A549 (cell line): ENCODE measurements at regions of chr7 and their contacts with region 1.

Region 1: DNA sequence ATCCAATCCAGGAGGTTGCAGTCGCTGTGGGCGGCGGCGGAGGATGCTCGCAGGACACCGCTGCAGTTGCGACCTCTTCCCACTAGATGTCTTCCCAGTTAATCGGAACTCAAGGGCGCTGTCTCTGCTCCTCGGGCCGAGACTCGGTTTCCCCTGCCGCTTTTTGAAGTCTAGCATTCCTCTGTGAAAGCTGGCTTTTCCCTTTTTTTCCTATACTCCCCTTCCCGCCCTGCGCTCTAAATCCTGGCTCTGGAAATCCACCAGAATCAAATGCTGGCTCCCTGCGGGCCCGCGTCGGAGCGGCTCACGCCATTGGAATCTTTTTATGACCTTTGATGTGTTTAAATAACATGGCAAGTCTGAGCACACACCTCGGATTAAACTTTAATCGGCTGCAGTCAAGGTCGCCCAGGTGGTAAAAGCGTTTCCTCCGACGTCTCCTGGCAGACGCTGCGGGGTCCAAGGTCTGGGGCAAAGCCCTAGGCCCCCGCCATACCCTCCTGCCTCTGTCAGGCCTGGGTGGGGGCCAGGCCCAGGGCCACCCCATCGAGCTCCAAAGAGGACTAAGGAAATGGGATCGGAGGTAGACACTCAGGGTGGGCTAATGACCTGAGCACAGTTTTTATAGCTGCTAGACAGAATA is 10.7 kb upstream of the HOXA13 start:
- DNase-seq: peak; percentile 64 to 79
- ATAC-seq: peak; percentile 91 to 94
- H3K4me3 ChIP-seq: peak overlapping the region; percentile 33
- H3K27ac ChIP-seq: peak overlapping the region; percentile 50 to 69
- H3K4me1 ChIP-seq: peaks cover 12% of the 10 kb centered on the region; the same call in 2 of the 3 replicates
- CTCF ChIP-seq: peak; percentile 67
- EP300 ChIP-seq: no peak
- POLR2A ChIP-seq: no peak
- RAD21 ChIP-seq: peak; percentile 77 to 79

Region 2: DNA sequence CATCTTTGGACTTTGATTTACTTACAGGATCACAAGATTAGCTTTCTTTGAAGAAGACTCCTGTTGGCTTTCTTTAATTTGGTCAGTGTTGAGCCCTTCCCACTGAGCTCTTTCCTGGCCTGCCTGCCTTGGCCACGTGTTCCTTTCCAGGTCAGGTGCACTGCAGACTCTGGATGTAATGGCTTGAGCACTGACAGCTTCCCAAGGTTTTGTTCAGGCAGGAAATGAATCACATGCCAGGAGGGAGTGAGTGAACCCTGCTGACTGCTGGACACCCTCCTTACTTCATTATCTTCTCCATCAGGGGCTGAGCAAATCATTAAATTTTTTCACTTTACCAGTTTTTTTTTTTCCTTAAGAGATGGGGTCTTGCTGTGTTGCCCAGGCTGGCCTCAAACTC is 889.1 kb before region 1 on chr7:
- CTCF ChIA-PET with region 1: no interaction called
- POLR2A ChIA-PET with region 1: no interaction called
- DNase-seq: no peak
- ATAC-seq: peak in 1 of 2 experiments; percentile 24; a peak in 1 of 6 replicates
- H3K4me3 ChIP-seq: no peak overlapping the region
- H3K27ac ChIP-seq: no peak overlapping the region
- H3K4me1 ChIP-seq: no peaks in the 10 kb centered on the region
- CTCF ChIP-seq: no peak
- EP300 ChIP-seq: no peak
- POLR2A ChIP-seq: no peak
- RAD21 ChIP-seq: no peak

Region 3: DNA sequence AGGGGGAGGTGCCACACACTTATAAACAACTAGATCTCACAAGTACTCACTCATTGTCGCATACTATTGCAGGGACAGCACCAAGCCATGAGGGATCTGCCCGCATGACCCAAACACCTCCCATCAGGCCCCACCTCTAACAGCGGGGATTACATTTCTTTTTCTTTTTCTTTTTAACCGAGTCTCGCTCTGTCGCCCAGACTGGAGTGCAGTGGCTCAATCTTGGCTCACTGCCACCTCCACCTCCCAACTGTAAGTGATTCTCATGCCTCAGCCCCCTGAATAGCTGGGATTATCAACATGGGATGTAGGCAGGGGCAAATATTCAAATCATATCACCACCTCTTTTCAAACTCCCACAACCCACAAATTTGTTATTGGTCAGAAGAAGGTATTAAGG is 422.9 kb before region 1 on chr7:
- CTCF ChIA-PET with region 1: no interaction called
- POLR2A ChIA-PET with region 1: no interaction called
- DNase-seq: no peak
- ATAC-seq: no peak
- H3K4me3 ChIP-seq: no peak overlapping the region
- H3K27ac ChIP-seq: no peak overlapping the region
- H3K4me1 ChIP-seq: no peaks in the 10 kb centered on the region
- CTCF ChIP-seq: no peak
- EP300 ChIP-seq: no peak
- POLR2A ChIP-seq: no peak
- RAD21 ChIP-seq: no peak

Region 4: GRCh38 chr7:27224983-27225934 is 14.7 kb after region 1 on chr7:
- CTCF ChIA-PET with region 1: interaction called, 48 read pairs
- POLR2A ChIA-PET with region 1: no interaction called
- DNase-seq: no peak
- ATAC-seq: no peak
- H3K4me3 ChIP-seq: no peak overlapping the region
- H3K27ac ChIP-seq: no peak overlapping the region
- H3K4me1 ChIP-seq: no peaks in the 10 kb centered on the region
- CTCF ChIP-seq: no peak
- EP300 ChIP-seq: no peak
- POLR2A ChIP-seq: no peak
- RAD21 ChIP-seq: no peak

Region 5: DNA sequence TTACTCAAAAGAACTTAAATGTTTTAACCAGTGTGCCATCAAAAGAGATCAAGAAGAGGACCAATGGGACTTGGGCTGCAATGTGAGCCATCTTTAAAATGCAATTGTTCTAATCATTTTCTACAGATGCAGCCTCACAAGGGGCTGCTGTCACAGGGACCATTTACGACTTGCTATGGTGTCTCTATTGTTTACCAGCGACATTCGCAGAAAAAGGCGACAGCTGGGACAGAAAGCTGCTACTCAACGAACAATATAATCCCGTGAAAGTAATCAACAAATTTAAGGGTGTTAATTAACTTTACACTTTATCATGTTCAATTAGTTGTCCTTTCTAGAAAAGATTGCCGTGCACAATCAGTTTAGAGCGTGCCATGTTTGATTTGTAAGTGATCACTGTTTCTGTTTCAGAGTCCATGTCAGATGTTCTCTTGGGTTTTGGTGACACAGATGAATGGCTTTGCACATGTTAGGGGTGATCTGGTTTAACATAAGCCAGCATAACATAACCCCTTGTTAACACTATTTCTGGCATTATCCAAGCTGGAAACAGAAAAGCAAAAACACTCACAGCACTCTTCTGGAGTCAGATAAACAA is 341.3 kb after region 1 on chr7:
- CTCF ChIA-PET with region 1: interaction called, 10 read pairs
- POLR2A ChIA-PET with region 1: no interaction called
- DNase-seq: no peak
- ATAC-seq: no peak
- H3K4me3 ChIP-seq: no peak overlapping the region
- H3K27ac ChIP-seq: no peak overlapping the region
- H3K4me1 ChIP-seq: peaks cover 22% of the 10 kb centered on the region; the same call in 2 of the 3 replicates
- CTCF ChIP-seq: no peak
- EP300 ChIP-seq: no peak
- POLR2A ChIP-seq: no peak
- RAD21 ChIP-seq: no peak

Region 6: GRCh38 chr7:27605689-27606269 is 395.2 kb after region 1 on chr7:
- CTCF ChIA-PET with region 1: interaction called, 15 read pairs
- POLR2A ChIA-PET with region 1: no interaction called
- DNase-seq: peak; percentile 22 to 55
- ATAC-seq: peak in 1 of 2 experiments; percentile 83; a peak in 4 of 6 replicates
- H3K4me3 ChIP-seq: peak overlapping the region; percentile 44
- H3K27ac ChIP-seq: peak overlapping the region; percentile 53 to 79
- H3K4me1 ChIP-seq: peaks cover 68% of the 10 kb centered on the region
- CTCF ChIP-seq: peak; percentile 84
- EP300 ChIP-seq: no peak
- POLR2A ChIP-seq: no peak
- RAD21 ChIP-seq: peak; percentile 54 to 73

Region 7: GRCh38 chr7:27921081-27921836 is 710.7 kb after region 1 on chr7:
- CTCF ChIA-PET with region 1: interaction called, 27 read pairs
- POLR2A ChIA-PET with region 1: no interaction called
- DNase-seq: peak; percentile 49 to 82
- ATAC-seq: peak; percentile 79 to 90
- H3K4me3 ChIP-seq: 0 out of 3 replicates have a peak overlapping the region, but pooled peaks have one; percentile 1
- H3K27ac ChIP-seq: peak overlapping the region; percentile 43 to 71; a peak in 5 of 6 replicates
- H3K4me1 ChIP-seq: peaks cover 37% of the 10 kb centered on the region
- CTCF ChIP-seq: peak; percentile 84
- EP300 ChIP-seq: no peak
- POLR2A ChIP-seq: no peak
- RAD21 ChIP-seq: peak; percentile 88 to 94

Region 8: GRCh38 chr7:28408960-28409715 is 1198.6 kb after region 1 on chr7:
- CTCF ChIA-PET with region 1: no interaction called
- POLR2A ChIA-PET with region 1: no interaction called
- DNase-seq: peak; percentile 59 to 85
- ATAC-seq: peak; percentile 64 to 65
- H3K4me3 ChIP-seq: peak overlapping the region; percentile 47
- H3K27ac ChIP-seq: peak overlapping the region; percentile 7 to 82; a peak in 5 of 6 replicates
- H3K4me1 ChIP-seq: peaks cover 33% of the 10 kb centered on the region
- CTCF ChIP-seq: no peak
- EP300 ChIP-seq: no peak
- POLR2A ChIP-seq: no peak
- RAD21 ChIP-seq: no peak